ENCODE measurements at regions of chr10 and their contacts with region 1.

Region 1: DNA sequence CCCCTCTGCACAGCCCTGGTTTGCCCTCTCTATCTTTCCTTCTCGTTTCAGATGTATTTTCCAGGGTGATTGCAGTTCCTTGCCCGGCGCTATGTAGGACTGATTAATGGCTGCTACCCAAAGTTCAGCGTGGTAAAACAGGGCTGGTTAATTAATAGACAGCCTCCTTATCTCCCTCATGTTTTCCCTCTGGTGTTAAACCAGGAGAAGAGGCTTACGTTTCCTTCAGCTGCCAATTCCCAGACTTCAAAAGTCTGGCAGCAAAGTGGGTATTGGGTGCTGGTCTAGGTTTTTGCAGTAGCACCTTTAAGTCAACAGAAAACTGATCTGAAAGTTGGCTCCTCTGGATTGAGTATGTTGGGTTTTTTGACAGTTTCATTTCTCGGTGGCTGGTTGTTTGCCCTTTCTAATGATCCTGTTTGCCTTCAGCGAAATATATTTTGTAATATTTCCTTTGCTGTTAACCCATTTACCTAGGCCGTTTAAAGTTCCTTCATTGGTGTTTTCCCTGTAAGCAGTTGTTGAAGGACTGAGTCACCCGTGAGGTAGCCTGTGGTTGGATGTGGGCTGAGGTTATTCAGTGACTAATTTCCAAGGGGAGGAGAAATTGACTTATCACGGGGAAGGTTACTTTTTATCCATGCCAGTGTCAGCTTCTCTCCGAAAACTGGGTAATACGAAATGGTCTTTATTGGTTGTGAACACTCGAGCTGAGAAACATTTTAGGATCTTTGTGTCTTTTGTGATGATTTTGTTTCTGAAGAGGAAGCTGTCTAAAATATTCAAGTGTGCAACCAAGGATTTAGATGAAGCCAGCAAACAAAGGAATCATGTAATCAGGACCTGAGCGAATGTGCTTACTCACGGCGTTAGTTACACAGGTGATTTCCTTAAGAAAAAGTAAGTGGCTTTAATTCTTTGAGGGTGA is 257.2 kb downstream of the KIAA1217 start:
- DNase-seq: peak; percentile 97
- H3K4me3 ChIP-seq: peak overlapping the region; percentile 49 to 82 (median 69)
- H3K27ac ChIP-seq: peak overlapping the region; percentile 99
- H3K4me1 ChIP-seq: peaks cover 48% of the 10 kb centered on the region
- H3K27me3 ChIP-seq: no peaks in the 10 kb centered on the region
- CTCF ChIP-seq: no peak

Region 2: GRCh38 chr10:24383681-24384106 is 82.5 kb before region 1 on chr10:
- CTCF ChIA-PET with region 1: no interaction called
- dilution Hi-C with region 1: no loop called
- in situ Hi-C with region 1: no loop called
- intact Hi-C with region 1: loop called (anchors 1 kb)
- DNase-seq: peak; percentile 98
- H3K4me3 ChIP-seq: peak overlapping the region; percentile 28 to 39 (median 33)
- H3K27ac ChIP-seq: peak overlapping the region; percentile 100
- H3K4me1 ChIP-seq: peaks cover 42% of the 10 kb centered on the region
- H3K27me3 ChIP-seq: no peaks in the 10 kb centered on the region
- CTCF ChIP-seq: peak; percentile 43 to 68

Region 3: GRCh38 chr10:24428410-24428782 is 37.8 kb before region 1 on chr10:
- CTCF ChIA-PET with region 1: no interaction called
- dilution Hi-C with region 1: no loop called
- in situ Hi-C with region 1: no loop called
- intact Hi-C with region 1: loop called (anchors 1 kb)
- DNase-seq: peak; percentile 86
- H3K4me3 ChIP-seq: no peak overlapping the region
- H3K27ac ChIP-seq: peak overlapping the region; percentile 83
- H3K4me1 ChIP-seq: peaks cover 21% of the 10 kb centered on the region
- H3K27me3 ChIP-seq: no peaks in the 10 kb centered on the region
- CTCF ChIP-seq: no peak

Region 4: GRCh38 chr10:24435374-24435773 is 30.8 kb before region 1 on chr10:
- CTCF ChIA-PET with region 1: no interaction called
- dilution Hi-C with region 1: no loop called
- in situ Hi-C with region 1: no loop called
- intact Hi-C with region 1: loop called (anchors 1 kb)
- DNase-seq: peak; percentile 80
- H3K4me3 ChIP-seq: no peak overlapping the region
- H3K27ac ChIP-seq: peak overlapping the region; percentile 59
- H3K4me1 ChIP-seq: peaks cover 25% of the 10 kb centered on the region
- H3K27me3 ChIP-seq: no peaks in the 10 kb centered on the region
- CTCF ChIP-seq: no peak

Region 5: DNA sequence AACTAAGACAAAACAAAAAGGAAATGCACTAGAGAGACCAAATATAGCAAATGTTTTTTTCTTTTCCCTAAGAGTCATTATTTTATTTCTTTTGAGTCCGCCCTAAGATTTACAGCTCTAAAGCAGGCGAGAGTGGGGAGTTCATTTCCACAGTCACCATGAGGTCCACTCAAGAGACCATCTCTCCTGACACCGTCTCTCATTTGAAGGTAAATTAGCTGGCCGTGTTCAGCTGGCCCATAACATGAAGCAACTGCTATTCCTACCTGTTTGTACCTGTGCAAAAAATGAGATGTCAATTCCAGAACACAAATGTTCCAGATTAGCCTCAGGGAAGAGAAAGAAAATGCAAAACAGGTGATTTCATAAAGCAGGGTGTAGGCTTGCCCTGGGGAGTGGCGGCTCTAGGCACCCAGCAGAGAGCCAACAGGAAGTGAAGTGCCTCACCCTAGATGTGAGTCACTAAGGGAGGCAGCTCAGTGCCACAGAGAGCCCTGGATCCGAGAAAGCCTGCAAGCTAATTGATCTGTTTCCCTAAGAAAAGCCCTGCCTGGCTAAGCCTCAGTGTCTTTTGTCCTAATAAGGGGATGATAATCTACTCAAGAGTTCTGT is 17.4 kb after region 1 on chr10:
- CTCF ChIA-PET with region 1: no interaction called
- dilution Hi-C with region 1: no loop called
- in situ Hi-C with region 1: no loop called
- intact Hi-C with region 1: loop called (anchors 2 kb)
- DNase-seq: peak; percentile 99
- H3K4me3 ChIP-seq: no peak overlapping the region
- H3K27ac ChIP-seq: peak overlapping the region; percentile 71
- H3K4me1 ChIP-seq: peaks cover 26% of the 10 kb centered on the region
- H3K27me3 ChIP-seq: no peaks in the 10 kb centered on the region
- CTCF ChIP-seq: no peak

Region 6: DNA sequence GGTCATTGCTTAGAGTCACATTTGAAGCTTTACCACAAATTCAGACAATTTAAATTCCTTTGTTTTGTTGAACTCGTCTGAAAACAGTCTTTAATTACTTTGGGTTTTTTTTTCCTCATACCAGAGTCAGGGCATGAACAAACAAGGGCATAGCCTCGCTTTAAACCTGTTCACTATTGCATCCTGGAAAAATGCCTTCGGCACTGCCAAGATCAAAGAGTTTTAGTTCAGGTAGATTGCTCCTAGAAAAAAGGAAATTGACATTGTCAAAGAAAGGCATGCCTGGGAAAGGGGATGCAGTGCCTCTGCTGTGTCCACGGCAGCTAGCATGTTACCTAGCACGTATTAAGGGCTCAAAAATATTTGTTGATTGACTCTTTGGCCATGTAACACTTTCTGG is 22.5 kb after region 1 on chr10:
- CTCF ChIA-PET with region 1: no interaction called
- dilution Hi-C with region 1: no loop called
- in situ Hi-C with region 1: no loop called
- intact Hi-C with region 1: loop called (anchors 1 kb)
- DNase-seq: peak; percentile 34
- H3K4me3 ChIP-seq: no peak overlapping the region
- H3K27ac ChIP-seq: peak overlapping the region; percentile 17
- H3K4me1 ChIP-seq: peaks cover 40% of the 10 kb centered on the region
- H3K27me3 ChIP-seq: no peaks in the 10 kb centered on the region
- CTCF ChIP-seq: no peak

Region 7: GRCh38 chr10:24561453-24561852 is 95.3 kb after region 1 on chr10:
- CTCF ChIA-PET with region 1: no interaction called
- dilution Hi-C with region 1: no loop called
- in situ Hi-C with region 1: no loop called
- intact Hi-C with region 1: no loop called
- DNase-seq: peak; percentile 46
- H3K4me3 ChIP-seq: no peak overlapping the region
- H3K27ac ChIP-seq: no peak overlapping the region
- H3K4me1 ChIP-seq: peaks cover 6% of the 10 kb centered on the region
- H3K27me3 ChIP-seq: no peaks in the 10 kb centered on the region
- CTCF ChIP-seq: no peak

Measured in mammary epithelial cell (primary cell).